ENCODE measurements at regions of chr15 and their contacts with region 1.

Region 1: GRCh38 chr15:40857601-40858341 is 13.9 kb downstream of the SPINT1 start:
- DNase-seq: peak; percentile 90

Region 2: GRCh38 chr15:40911141-40911540 is 53.4 kb after region 1 on chr15:
- intact Hi-C with region 1: no loop called
- DNase-seq: no peak

Region 3: DNA sequence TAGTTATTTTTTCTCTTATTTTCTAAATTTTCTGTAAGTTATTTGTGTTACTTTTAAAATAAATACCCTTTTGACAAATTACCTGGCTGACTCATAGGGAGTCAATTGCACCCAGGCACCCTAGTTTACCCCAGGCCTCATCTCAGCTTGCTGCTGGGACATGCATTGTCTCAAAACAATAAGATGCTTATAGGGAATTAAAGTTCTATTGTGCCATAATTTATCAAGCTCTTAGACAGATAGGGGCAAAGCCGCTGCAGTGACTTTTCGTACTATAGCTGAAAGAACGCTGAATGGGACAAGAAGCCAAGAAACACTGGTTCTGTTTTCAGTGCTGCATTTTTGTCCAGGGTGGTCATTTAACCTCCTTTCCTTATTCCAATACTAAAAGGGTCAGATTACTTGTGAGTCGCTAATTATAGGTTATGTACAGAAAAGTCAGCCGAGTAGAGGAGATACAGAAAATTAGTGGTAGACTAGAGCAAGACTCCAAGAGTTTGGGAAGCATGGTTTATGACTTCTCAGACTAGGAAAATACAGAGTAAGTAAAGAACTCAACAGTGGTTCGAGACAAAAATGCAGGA is 322.5 kb after region 1 on chr15:
- intact Hi-C with region 1: loop called (anchors 10 kb)
- DNase-seq: no peak